ENCODE measurements at regions of chr4 and their contacts with region 1.

Region 1: DNA sequence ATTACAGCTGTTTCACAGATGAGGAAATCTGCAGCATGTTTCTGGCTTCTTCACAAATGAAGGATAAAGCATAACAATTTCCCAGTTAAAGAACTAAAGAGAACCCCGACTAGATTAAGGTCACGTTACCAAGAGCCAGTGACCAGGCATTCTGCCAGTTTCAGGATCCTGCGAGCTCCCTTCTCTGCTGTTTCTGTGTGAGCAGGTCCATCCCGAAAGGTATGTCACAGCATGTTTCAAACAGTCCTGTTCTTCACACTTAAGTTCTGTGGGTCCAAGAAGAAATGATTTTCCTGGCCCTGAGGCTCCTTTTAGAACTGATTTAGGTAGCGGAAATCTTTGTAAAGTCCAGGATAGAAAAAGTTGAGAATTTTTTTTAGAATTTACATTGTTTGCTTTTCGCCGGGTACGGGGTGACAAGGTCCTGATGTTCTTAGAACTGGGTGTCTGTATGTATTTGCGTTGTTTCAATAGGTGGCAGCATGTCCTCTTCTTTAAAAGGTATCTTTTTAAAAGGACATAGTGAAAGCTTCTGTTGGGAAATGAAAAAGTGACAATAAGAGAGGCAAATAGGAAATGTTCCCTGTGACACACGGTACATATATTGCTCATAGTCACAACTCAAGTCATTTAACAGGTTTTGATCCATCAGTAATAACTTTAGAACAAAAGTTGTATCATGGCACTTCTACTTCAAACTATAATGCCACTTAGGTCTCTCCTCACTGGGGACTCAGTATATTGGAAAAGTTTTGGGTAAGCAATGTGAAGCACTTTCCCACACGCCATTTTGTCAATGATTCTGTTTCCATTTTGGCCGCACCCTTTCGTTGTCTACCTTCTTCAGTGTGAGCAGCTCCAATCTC is 18.4 kb downstream of the IL21 start:
- DNase-seq: peak; percentile 40
- ATAC-seq: peak; percentile 89
- H3K4me3 Mint-ChIP-seq: peak overlapping the region; percentile 54
- H3K27ac Mint-ChIP-seq: peak overlapping the region; percentile 59
- H3K4me1 Mint-ChIP-seq: peaks cover 30% of the 10 kb centered on the region
- H3K27me3 Mint-ChIP-seq: peaks cover 3% of the 10 kb centered on the region

Region 2: DNA sequence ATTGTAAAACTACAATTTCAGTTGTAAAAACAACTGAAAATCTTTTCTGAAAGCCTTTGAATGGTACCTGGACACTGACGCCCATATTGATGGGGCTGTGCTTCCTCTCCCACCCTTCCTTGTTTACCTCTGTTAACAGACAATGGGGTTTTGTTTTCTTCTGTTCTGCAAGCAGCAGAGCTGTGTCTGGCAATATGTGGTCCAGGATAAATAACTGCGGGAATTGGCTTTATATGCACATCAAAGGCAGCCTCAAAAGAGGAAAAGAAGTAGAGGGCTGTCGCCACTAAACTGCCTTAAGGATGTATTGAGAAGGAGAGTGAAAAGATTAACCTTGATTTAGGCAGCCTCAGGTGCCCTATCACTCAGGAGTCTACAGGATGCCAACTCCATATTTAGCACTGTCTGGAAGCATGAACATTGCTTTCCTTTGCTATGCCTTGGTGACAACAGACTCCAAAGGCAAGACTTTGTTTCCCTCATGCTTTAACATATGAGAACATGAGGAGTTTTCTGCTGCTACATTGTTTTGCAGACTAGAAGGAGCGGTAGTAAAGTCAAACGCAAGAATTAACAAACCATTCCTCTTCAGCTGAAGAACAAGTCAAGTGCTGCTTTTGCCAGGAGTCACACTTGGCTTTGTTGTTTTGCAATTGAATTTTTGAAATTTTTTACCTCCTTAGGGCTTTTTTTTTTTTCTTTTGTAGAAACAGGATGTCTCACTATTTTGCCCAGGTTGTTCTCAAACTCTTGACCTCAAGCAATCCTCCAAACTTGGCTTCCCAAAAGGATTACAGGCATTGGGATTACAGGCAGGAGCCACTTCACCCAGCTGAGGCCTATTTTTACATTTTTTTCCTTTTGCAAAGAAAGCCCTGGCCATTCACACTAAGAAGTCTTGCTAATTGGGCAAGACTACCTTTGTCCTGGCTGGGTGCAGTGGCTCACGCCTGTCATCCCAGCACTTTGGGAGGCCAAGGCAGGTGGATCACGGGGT is 15.4 kb after region 1 on chr4:
- CTCF ChIA-PET with region 1: interaction called, 45 read pairs
- POLR2A ChIA-PET with region 1: no interaction called
- intact Hi-C with region 1: loop called in 1 of 2 experiments (anchors 2 kb)
- DNase-seq: no peak
- ATAC-seq: no peak
- H3K4me3 Mint-ChIP-seq: peak overlapping the region; percentile 80
- H3K27ac Mint-ChIP-seq: peak overlapping the region; percentile 87
- H3K4me1 Mint-ChIP-seq: peaks cover 62% of the 10 kb centered on the region
- H3K27me3 Mint-ChIP-seq: no peaks in the 10 kb centered on the region

Region 3: GRCh38 chr4:122666527-122667245 is 64.2 kb after region 1 on chr4:
- CTCF ChIA-PET with region 1: interaction called, 7 read pairs
- POLR2A ChIA-PET with region 1: no interaction called
- intact Hi-C with region 1: loop called in 1 of 2 experiments (anchors 2 kb)
- DNase-seq: peak; percentile 41
- ATAC-seq: peak; percentile 58
- H3K4me3 Mint-ChIP-seq: peak overlapping the region; percentile 27
- H3K27ac Mint-ChIP-seq: peak overlapping the region; percentile 95
- H3K4me1 Mint-ChIP-seq: peaks cover 82% of the 10 kb centered on the region
- H3K27me3 Mint-ChIP-seq: no peaks in the 10 kb centered on the region

Region 4: GRCh38 chr4:122827879-122828601 is 225.5 kb after region 1 on chr4:
- CTCF ChIA-PET with region 1: interaction called, 3 read pairs
- POLR2A ChIA-PET with region 1: no interaction called
- intact Hi-C with region 1: loop called (anchors 5 to 10 kb)
- DNase-seq: peak; percentile 70
- ATAC-seq: peak; percentile 89
- H3K4me3 Mint-ChIP-seq: peak overlapping the region; percentile 75
- H3K27ac Mint-ChIP-seq: peak overlapping the region; percentile 40
- H3K4me1 Mint-ChIP-seq: peaks cover 12% of the 10 kb centered on the region
- H3K27me3 Mint-ChIP-seq: peaks cover 70% of the 10 kb centered on the region

Region 5: GRCh38 chr4:123284168-123284567 is 681.7 kb after region 1 on chr4:
- CTCF ChIA-PET with region 1: no interaction called
- POLR2A ChIA-PET with region 1: no interaction called
- intact Hi-C with region 1: no loop called
- DNase-seq: no peak
- ATAC-seq: no peak
- H3K4me3 Mint-ChIP-seq: no peak overlapping the region
- H3K27ac Mint-ChIP-seq: peak overlapping the region; percentile 15
- H3K4me1 Mint-ChIP-seq: no peaks in the 10 kb centered on the region
- H3K27me3 Mint-ChIP-seq: no peaks in the 10 kb centered on the region

Region 6: DNA sequence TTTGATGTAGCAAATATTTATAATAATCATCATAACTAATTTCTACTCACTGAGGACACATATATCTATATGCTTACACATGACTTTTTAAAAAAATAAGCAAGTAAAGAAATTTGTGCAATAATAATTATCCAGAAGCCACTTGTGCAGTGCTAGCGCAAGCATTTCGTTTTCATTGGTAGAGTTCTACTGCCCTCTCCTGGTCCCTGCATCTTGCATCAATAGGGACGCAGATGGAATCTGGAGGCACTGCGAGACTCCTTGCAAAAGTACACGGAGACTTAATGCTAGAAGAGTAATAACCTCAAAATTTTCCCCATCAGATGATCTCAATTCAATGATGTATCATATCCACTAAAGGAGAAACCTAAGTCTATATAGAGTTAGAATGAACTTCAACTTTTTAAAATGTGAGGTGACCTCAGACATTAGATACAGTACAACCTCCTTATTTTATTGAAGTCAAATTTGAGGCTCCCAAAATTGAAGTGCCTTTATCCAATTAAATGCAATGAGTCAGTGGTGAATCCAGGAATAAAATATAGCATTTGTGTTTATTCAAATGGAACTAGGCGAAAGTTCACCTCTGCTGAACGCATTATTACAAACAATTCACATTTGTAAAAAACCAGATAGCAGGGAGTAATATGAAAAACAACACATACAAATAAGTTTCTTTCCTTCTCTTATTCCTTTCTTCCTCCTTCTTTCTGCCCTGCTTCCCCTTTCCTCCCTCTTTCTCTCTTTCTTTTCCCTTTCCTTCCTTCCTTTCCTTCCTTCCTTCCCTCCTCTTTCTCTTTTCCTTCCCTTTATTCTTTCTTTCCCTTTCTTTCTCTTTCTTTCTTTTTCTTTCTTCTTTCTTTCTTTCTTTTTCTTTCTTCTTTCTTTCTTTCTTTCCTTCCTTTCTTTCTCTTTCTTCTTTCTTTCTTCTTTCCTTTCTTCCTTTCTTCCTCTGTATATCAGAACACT is 1660.0 kb after region 1 on chr4:
- CTCF ChIA-PET with region 1: no interaction called
- POLR2A ChIA-PET with region 1: no interaction called
- intact Hi-C with region 1: loop called in 1 of 2 experiments (anchors 10 kb)
- DNase-seq: peak; percentile 60
- ATAC-seq: peak; percentile 58
- H3K4me3 Mint-ChIP-seq: no peak overlapping the region
- H3K27ac Mint-ChIP-seq: no peak overlapping the region
- H3K4me1 Mint-ChIP-seq: no peaks in the 10 kb centered on the region
- H3K27me3 Mint-ChIP-seq: peaks cover 2% of the 10 kb centered on the region

Measured in activated CD4-positive, alpha-beta T cell treated with anti-CD3 and anti-CD28 coated beads for 36 hours (primary cell).